Gastrocnemius medialis (tissue), 4 donors: ENCODE measurements at regions of chr2 and their contacts with region 1.

Region 1: DNA sequence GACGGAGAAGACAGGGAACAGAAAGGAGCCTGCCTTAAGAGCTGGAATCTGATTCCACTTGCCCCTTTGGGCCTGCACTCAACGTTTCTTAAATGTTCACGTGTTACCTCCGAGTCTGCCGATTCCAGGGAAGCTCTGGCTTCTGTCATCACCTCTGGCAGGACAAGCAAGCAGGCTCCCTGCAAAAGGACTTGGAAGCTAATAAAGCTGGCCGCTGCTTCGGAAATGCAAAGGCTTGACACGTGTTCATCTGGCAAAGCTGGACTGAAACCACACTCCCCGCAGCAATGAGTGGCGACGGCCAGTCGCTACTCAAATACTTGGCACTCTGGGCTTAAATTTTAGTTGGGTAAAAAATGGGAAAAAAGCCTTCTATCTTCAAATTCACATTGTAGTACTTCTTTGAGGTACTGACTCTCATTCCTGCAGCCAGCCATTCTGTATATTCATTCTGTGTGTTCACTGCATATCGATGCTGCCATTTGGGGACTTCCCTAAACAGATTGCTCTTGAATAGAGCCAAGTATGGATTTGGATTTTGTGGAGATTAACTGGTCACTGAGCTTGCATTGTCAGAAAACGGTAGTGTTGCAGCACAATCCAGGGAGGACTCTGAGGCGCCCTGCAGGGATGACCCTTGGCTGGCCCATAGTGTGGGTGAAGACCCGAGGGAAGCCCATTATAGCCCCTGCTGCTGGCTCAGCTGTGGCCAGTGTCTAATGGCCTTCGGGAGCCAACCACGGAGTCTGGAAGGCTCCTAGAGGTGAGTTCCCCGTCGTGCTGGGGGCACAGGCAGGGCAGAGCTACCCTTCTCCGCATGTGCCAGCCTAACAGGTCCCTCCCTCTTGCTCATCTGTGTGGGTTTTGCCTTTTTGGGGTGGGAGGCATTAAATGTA is 231.5 kb downstream of the PRKCE start:
- DNase-seq: peak; percentile 67 to 79
- ATAC-seq: peak; percentile 81 to 86
- H3K4me3 ChIP-seq: peak overlapping the region in 2 of 4 donors; percentile 3 to 16
- H3K27ac ChIP-seq: peak overlapping the region; percentile 54 to 78 (median 62)
- H3K4me1 ChIP-seq: peaks cover 22 to 55% of the 10 kb centered on the region in 2 donors
- H3K27me3 ChIP-seq: no peaks in the 10 kb centered on the region
- CTCF ChIP-seq: no peak
- POLR2A ChIP-seq: no peak

Region 2: DNA sequence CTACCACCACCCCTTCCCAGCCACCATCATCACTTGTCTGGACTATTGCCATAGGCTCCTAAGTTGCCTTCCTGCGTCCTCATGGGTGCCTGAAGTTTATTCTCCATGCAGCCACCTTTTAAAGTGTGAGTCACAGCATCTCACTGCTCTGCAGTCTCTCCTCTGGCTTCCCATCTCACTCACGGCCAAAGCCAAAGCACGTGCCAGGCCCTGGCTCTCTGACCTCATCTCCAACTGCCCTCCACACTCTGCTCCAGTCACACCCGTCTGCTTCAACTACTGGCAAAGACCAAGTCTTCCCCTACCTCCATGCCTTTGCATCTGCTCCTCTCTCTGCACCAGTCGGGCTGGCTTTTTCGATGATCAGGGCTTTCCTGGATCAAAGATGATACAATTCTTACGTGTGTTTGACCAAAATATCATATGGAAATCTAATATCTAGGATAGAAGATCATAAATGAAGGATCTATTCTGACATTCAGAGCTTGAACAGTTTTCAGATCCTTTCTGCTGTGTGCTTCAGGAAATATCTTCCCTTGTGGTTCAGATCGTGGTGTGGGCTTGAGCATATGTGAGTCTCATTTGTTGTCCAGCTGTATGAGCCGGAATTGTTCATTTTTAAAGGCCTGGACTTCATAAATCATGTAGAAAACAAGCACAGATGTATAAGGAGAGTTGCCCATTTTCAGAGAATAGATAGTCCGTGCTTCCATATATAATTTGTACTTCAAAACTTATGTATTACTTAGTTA is 55.9 kb before region 1 on chr2:
- in situ Hi-C with region 1: no loop called
- intact Hi-C with region 1: loop called (anchors 5 kb)
- DNase-seq: peak; percentile 35 to 88
- ATAC-seq: peak; percentile 14 to 57
- H3K4me3 ChIP-seq: no peak overlapping the region
- H3K27ac ChIP-seq: peak overlapping the region in 2 of 4 donors; percentile 14 to 35
- H3K4me1 ChIP-seq: peaks cover 29 to 34% of the 10 kb centered on the region in 2 donors
- H3K27me3 ChIP-seq: no peaks in the 10 kb centered on the region
- CTCF ChIP-seq: no peak
- POLR2A ChIP-seq: no peak

Region 3: DNA sequence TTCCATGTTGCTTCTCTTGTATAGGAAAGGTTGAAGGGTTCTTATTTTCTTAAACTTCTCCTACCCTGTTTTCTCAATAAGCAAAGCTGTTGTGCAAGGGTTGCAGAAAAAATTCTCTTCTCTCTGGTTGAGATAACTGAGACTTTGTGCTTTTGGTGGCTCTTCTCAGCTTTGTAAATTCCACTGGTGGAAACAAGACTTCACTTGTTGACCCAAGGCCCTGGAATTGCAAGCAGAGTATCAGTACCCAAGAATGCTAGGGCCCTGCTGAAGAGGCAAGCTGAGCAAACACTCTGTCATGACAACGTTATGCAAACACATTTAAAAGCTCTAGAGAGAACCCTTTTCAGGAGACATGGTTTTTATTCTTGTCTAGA is 119.5 kb after region 1 on chr2:
- in situ Hi-C with region 1: no loop called
- intact Hi-C with region 1: no loop called
- DNase-seq: no peak
- ATAC-seq: no peak
- H3K4me3 ChIP-seq: no peak overlapping the region
- H3K27ac ChIP-seq: no peak overlapping the region
- H3K4me1 ChIP-seq: peaks cover 0 to 14% of the 10 kb centered on the region in 2 donors
- H3K27me3 ChIP-seq: no peaks in the 10 kb centered on the region
- CTCF ChIP-seq: no peak
- POLR2A ChIP-seq: no peak